B cell (primary cell): ENCODE measurements at regions of chr16 and their contacts with region 1.

Region 1: DNA sequence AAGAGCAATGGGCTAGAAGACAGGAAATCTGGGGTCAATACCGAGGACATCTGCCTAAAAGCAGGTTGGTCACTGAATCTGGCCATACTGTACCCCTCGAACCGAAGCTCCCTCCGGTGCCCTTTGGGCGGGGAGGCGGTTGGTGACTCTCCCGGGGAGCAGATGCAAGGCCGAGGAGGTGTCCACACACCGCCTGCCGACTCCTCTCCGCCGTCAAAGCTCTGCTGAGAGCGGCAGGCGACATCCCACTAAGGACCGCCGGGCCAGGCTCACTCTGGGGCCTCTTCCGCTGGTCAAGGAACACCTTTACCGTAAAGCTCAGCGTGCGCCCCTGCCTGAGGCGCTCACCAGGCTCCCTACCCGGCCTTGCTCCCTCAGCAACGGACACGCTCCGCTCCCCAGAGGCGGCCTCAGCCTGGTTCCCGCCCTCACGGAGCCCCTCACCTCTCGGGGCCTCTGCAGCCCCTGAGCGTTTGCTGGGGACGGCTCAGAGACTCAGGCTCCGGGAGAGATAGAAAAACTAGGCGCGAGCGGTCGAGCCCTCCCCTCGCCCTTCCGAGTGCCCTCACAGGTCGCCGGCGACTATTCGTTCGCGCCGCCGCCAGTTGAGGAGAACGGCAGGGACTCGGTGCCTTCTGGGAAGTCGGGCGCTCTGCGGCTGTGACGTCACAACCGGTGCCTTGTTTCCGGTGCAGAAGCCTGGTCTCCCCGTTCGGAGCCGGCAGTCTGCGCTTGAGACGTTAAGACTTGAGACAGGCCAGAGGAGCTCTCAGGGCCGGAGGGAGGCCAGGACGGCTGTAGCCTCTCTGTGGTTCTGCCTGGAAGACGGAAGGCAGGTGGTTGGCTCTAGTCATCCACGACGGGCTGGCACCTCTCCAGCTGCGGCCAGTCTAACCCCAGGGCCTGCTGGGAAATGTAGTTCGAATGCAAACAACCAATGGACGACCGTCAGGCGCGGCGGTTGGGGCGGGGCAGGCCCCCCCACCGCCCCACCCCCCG is at the start of gene ZNF200:
- DNase-seq: peak; percentile 98
- ATAC-seq: peak; percentile 85
- H3K4me3 ChIP-seq: peak within 1 kb of the TSS; percentile 75 to 95 (median 95)
- H3K4me3 Mint-ChIP-seq: peak within 1 kb of the TSS; percentile 94
- H3K27ac ChIP-seq: peak within 1 kb of the TSS; percentile 96
- H3K27ac Mint-ChIP-seq: peak within 1 kb of the TSS; percentile 97
- H3K4me1 ChIP-seq: peaks cover 12 to 16% of the 10 kb centered on the region in 2 donors
- H3K4me1 Mint-ChIP-seq: peaks cover 23% of the 10 kb centered on the region
- H3K27me3 ChIP-seq: no peaks in the 10 kb centered on the region
- H3K27me3 Mint-ChIP-seq: no peaks in the 10 kb centered on the region
- CTCF ChIP-seq: no peak
- total RNA-seq, gene ZNF200: 16.1 and 20.1 TPM in 2 replicates

Region 2: GRCh38 chr16:2897113-2897512 is 337.7 kb before region 1 on chr16:
- CTCF ChIA-PET with region 1: no interaction called
- POLR2A ChIA-PET with region 1: no interaction called
- intact Hi-C with region 1: no loop called
- DNase-seq: peak; percentile 85
- ATAC-seq: peak; percentile 100
- H3K4me3 ChIP-seq: no peak overlapping the region
- H3K4me3 Mint-ChIP-seq: peak overlapping the region; percentile 70
- H3K27ac ChIP-seq: no peak overlapping the region
- H3K27ac Mint-ChIP-seq: peak overlapping the region; percentile 50
- H3K4me1 ChIP-seq: peaks cover 17 to 21% of the 10 kb centered on the region in 2 donors
- H3K4me1 Mint-ChIP-seq: peaks cover 13% of the 10 kb centered on the region
- H3K27me3 ChIP-seq: no peaks in the 10 kb centered on the region
- H3K27me3 Mint-ChIP-seq: no peaks in the 10 kb centered on the region
- CTCF ChIP-seq: no peak

Region 3: GRCh38 chr16:3264137-3265036 is 29.5 kb after region 1 on chr16:
- CTCF ChIA-PET with region 1: no interaction called
- POLR2A ChIA-PET with region 1: interaction called, 12 read pairs
- intact Hi-C with region 1: loop called (anchors 1 kb)
- DNase-seq: peak; percentile 97
- ATAC-seq: peak; percentile 86
- H3K4me3 ChIP-seq: peak overlapping the region; percentile 75 to 84 (median 78)
- H3K4me3 Mint-ChIP-seq: peak overlapping the region; percentile 92
- H3K27ac ChIP-seq: peak overlapping the region; percentile 85 to 86
- H3K27ac Mint-ChIP-seq: peak overlapping the region; percentile 95
- H3K4me1 ChIP-seq: peaks cover 9 to 18% of the 10 kb centered on the region in 2 donors
- H3K4me1 Mint-ChIP-seq: peaks cover 28% of the 10 kb centered on the region
- H3K27me3 ChIP-seq: no peaks in the 10 kb centered on the region
- H3K27me3 Mint-ChIP-seq: no peaks in the 10 kb centered on the region
- CTCF ChIP-seq: peak; percentile 54

Region 4: DNA sequence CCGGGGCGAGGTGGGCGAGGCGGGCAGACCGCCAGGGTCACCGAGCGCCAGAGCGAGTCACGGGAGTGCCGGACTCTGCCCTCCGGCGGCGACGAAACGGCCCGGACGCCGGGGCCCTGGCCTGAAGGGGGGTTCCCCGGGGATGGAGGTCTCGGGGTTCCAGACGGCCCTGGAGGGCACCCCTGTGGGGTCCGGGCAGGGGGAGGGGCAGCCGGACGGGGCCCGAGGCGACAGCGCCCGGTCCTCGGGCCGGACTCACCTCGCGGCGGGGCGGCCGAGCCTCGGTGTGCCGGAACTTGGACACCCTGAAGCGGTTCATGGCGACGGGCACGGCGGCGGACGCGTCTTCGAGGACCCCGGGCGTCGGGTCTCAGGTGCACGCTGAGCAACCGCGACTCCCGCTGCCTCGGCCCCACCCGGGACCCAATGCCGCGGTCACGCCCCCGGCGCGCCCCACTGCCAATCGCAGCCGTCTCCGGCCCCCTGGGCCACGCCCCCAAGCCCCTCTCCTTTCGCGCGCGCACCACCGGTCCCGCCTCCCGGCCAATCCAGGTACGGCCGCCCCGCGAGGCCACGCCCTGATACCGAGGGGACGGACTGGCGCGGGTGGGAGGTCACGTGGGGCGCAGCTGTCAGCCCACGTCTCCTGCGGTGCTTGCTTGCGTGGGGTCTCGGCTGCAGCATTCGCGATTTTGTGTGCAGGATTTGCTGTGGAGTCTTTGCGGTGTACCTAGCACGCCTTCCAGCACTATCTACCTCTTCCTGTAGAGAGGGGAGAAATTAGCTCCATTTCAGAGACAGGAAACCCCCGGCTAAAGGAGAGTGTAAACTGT is 1181.6 kb after region 1 on chr16 and contains the start of gene CORO7:
- CTCF ChIA-PET with region 1: no interaction called
- POLR2A ChIA-PET with region 1: no interaction called
- intact Hi-C with region 1: no loop called
- DNase-seq: peak; percentile 99
- ATAC-seq: peak; percentile 90
- H3K4me3 ChIP-seq: peak within 1 kb of the TSS; percentile 62 to 94 (median 78)
- H3K4me3 Mint-ChIP-seq: peak within 1 kb of the TSS; percentile 96
- H3K27ac ChIP-seq: peak within 1 kb of the TSS; percentile 91 to 95
- H3K27ac Mint-ChIP-seq: peak within 1 kb of the TSS; percentile 95
- H3K4me1 ChIP-seq: peaks cover 24 to 35% of the 10 kb centered on the region in 2 donors
- H3K4me1 Mint-ChIP-seq: peaks cover 31% of the 10 kb centered on the region
- H3K27me3 ChIP-seq: no peaks in the 10 kb centered on the region
- H3K27me3 Mint-ChIP-seq: no peaks in the 10 kb centered on the region
- CTCF ChIP-seq: no peak
- total RNA-seq, gene CORO7: 114 and 117 TPM in 2 replicates